H1 (cell line): ENCODE measurements at regions of chr17 and their contacts with region 1.

Region 1: GRCh38 chr17:74748529-74749365 is at the start of gene NHERF1:
- DNase-seq: peak in 1 of 2 experiments; percentile 94
- H3K4me3 ChIP-seq: peak within 1 kb of the TSS; percentile 56 to 91 (median 86)
- H3K27ac ChIP-seq: peak within 1 kb of the TSS; percentile 32; the same call in 1 of the 2 replicates
- H3K4me1 ChIP-seq: peaks cover 5 to 45% (median 25%) of the 10 kb centered on the region in 4 experiments
- H3K27me3 ChIP-seq: no peaks in the 10 kb centered on the region
- CTCF ChIP-seq: peak; percentile 34 to 37 (median 35)
- EP300 ChIP-seq: no peak
- POLR2A ChIP-seq: peak in 1 of 2 experiments; percentile 94; a peak in 2 of 3 replicates
- RAD21 ChIP-seq: peak in 1 of 2 experiments; percentile 22; a peak in 1 of 4 replicates
- total RNA-seq, gene NHERF1: 91.3 and 92.9 TPM in 2 replicates

Region 2: DNA sequence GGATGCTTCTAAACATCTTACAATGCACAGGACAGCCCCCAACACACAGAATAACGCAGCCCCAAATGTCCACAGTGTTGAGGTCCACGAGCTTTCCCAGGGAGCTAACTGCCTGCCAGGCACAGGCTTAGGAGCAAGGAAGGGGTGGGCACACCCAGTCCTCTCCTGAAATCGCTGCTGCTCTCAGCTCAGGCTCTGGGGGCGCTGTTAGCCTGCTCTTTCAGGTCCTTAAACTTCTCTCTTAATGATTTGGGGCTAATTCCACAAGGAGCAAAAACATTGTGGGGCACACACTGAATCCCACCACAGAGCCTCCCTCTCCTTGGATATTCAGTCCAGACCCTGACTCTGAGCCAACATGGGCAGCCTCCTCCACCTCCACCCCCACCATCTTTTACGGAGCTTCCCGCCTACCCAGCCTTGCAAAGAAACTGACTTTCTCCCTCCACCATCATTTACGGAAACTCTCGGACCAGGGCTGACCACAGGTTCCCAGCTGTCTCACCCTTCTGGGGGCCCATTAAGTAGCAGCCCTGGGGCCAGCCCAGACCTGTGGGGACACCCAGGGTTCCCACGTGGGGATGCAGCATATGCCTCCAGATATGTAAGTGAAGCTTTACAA is 182.5 kb before region 1 on chr17:
- CTCF ChIA-PET with region 1: interaction called, 15 read pairs
- POLR2A ChIA-PET with region 1: no interaction called
- DNase-seq: peak; percentile 31 to 85
- H3K4me3 ChIP-seq: no peak overlapping the region
- H3K27ac ChIP-seq: no peak overlapping the region
- H3K4me1 ChIP-seq: peaks cover 0 to 3% (median 2%) of the 10 kb centered on the region in 4 experiments; a peak in 3 of 7 replicates
- H3K27me3 ChIP-seq: peaks cover 0 to 2% (median 0%) of the 10 kb centered on the region in 4 experiments; a peak in 2 of 7 replicates
- CTCF ChIP-seq: peak; percentile 72 to 95 (median 76)
- EP300 ChIP-seq: no peak
- POLR2A ChIP-seq: no peak
- RAD21 ChIP-seq: peak; percentile 71 to 77

Region 3: GRCh38 chr17:74659898-74660297 is 88.8 kb before region 1 on chr17:
- CTCF ChIA-PET with region 1: interaction called, 38 read pairs
- POLR2A ChIA-PET with region 1: no interaction called
- DNase-seq: no peak
- H3K4me3 ChIP-seq: no peak overlapping the region
- H3K27ac ChIP-seq: no peak overlapping the region
- H3K4me1 ChIP-seq: 0 out of 7 replicates have a peak, but pooled peaks cover 0 to 2% (median 0%) of the 10 kb centered on the region in 4 experiments
- H3K27me3 ChIP-seq: no peaks in the 10 kb centered on the region
- CTCF ChIP-seq: no peak
- EP300 ChIP-seq: no peak
- POLR2A ChIP-seq: no peak
- RAD21 ChIP-seq: no peak

Region 4: DNA sequence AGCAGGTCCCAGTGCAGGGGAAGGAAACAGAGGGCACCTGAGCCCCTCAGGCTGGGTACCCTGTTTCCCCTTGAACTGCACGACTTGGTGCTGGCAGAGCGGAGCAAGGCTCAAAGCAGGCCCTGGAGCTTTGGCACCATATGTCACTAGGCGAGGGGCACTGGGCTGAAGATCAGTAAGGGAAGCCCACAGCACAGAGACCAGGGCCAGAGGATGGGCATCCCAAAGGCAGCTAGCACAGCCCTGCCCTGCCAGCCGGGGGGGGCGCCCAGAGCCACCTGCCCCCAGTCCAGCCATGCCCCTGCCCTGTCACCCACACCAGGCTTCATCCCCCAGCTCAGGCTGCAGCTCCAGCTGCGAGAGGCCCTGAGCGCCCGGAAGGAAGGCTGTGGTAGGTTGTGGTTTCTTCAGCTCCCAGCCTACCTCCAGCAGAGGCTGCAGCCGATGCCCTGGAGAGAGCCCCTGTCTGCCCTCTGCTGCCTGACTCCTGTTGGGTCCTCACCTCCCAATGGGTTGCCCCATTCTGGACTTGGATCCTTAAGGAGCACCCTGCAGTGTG is 10.6 kb after region 1 on chr17:
- CTCF ChIA-PET with region 1: interaction called, 170 read pairs
- POLR2A ChIA-PET with region 1: interaction called, 70 read pairs
- DNase-seq: no peak
- H3K4me3 ChIP-seq: peak overlapping the region in 1 of 4 experiments; percentile 36; a peak in 2 of 8 replicates
- H3K27ac ChIP-seq: peak overlapping the region; percentile 70; the same call in 1 of the 2 replicates
- H3K4me1 ChIP-seq: peaks cover 10 to 67% (median 51%) of the 10 kb centered on the region in 4 experiments
- H3K27me3 ChIP-seq: no peaks in the 10 kb centered on the region
- CTCF ChIP-seq: no peak
- EP300 ChIP-seq: no peak
- POLR2A ChIP-seq: no peak
- RAD21 ChIP-seq: no peak

Region 5: GRCh38 chr17:74776044-74776977 is 27.6 kb after region 1 on chr17 and contains the start of gene NAT9:
- CTCF ChIA-PET with region 1: interaction called, 388 read pairs
- POLR2A ChIA-PET with region 1: interaction called, 54 read pairs
- DNase-seq: peak; percentile 92 to 100
- H3K4me3 ChIP-seq: peak within 1 kb of the TSS; percentile 73 to 89 (median 80)
- H3K27ac ChIP-seq: peak within 1 kb of the TSS; percentile 39; the same call in 1 of the 2 replicates
- H3K4me1 ChIP-seq: peaks cover 0 to 6% (median 3%) of the 10 kb centered on the region in 4 experiments; a peak in 3 of 7 replicates
- H3K27me3 ChIP-seq: no peaks in the 10 kb centered on the region
- CTCF ChIP-seq: no peak
- EP300 ChIP-seq: no peak
- POLR2A ChIP-seq: no peak; a peak in 1 of 3 replicates
- RAD21 ChIP-seq: no peak
- total RNA-seq, gene NAT9: 40.6 and 42.7 TPM in 2 replicates

Region 6: GRCh38 chr17:74795327-74796020 is 46.7 kb after region 1 on chr17:
- CTCF ChIA-PET with region 1: interaction called, 46 read pairs
- POLR2A ChIA-PET with region 1: no interaction called
- DNase-seq: no peak
- H3K4me3 ChIP-seq: no peak overlapping the region
- H3K27ac ChIP-seq: no peak overlapping the region
- H3K4me1 ChIP-seq: no peaks in the 10 kb centered on the region
- H3K27me3 ChIP-seq: no peaks in the 10 kb centered on the region
- CTCF ChIP-seq: no peak
- EP300 ChIP-seq: no peak
- POLR2A ChIP-seq: no peak
- RAD21 ChIP-seq: no peak

Region 7: DNA sequence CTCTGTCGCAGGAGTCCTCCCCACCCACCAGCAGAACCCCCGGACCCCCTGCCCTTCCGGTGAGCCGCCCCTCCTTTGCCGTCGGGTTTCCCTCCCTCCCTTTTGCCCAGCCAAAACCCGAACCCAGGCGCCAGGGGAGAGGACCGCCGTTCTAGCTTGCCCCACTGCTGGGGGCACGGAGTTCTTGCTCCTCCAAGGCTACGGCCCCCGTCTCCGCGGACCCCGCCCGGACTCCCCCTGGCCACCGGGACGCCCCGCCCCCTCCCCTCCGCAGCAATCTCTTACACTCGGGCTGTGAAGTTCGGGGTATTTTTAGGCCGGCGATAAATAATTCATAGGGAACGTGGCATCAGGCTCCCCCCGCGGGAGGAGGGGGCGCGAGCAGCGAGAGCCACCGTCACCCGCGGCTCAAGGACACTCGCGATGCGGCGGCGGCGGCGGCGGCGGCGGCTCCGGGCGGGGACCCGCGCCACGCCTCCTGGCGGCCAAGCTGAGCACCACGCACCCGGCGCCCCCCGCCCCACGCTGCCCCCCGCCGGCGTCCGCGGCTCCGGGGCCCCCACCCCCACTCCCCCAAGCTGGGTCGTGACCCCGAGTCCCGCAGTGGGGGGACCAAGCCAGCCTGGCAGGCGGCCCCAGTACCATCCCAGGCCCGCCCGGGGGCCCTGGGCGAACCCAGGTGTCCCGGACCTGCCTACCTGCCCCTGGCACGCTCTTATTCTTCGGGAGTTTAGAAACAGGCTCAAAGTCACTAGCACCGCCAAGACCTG is 110.9 kb after region 1 on chr17 and contains the start of gene GRIN2C:
- CTCF ChIA-PET with region 1: interaction called, 68 read pairs
- POLR2A ChIA-PET with region 1: interaction called, 9 read pairs
- DNase-seq: peak in 1 of 2 experiments; percentile 69
- H3K4me3 ChIP-seq: peak within 1 kb of the TSS; percentile 21 to 60 (median 31); a peak in 6 of 8 replicates
- H3K27ac ChIP-seq: no peak within 1 kb of the TSS
- H3K4me1 ChIP-seq: peaks cover 0 to 7% (median 5%) of the 10 kb centered on the region in 4 experiments; a peak in 4 of 7 replicates
- H3K27me3 ChIP-seq: peaks cover 52 to 72% (median 64%) of the 10 kb centered on the region in 4 experiments
- CTCF ChIP-seq: peak; percentile 7 to 62 (median 25); a peak in 2 of 4 replicates
- EP300 ChIP-seq: no peak
- POLR2A ChIP-seq: no peak
- RAD21 ChIP-seq: no peak
- total RNA-seq, gene GRIN2C: 0.07 TPM in 1 of 2 replicates, not detected in the other

Region 8: DNA sequence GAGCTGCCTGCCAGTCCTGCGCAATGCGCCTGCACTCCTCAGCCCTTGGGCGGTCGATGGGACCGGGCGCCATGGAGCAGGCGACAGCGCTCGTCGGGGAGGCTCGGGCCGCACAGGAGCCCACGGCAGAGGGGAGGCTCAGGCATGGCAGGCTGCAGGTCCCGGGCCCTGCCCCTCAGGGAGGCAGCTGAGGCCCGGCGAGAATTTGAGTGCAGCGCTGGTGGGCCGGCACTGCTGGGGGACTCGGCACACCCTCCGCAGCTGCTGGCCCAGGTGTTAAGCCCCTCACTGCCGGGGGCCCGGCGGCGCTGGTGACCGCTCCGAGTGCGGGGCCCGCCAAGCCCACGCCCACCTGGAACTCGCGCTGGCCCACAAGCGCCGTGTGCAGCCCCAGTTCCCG is 158.3 kb after region 1 on chr17:
- CTCF ChIA-PET with region 1: no interaction called
- POLR2A ChIA-PET with region 1: no interaction called
- DNase-seq: no peak
- H3K4me3 ChIP-seq: no peak overlapping the region
- H3K27ac ChIP-seq: no peak overlapping the region
- H3K4me1 ChIP-seq: peaks cover 5 to 18% (median 14%) of the 10 kb centered on the region in 4 experiments
- H3K27me3 ChIP-seq: peaks cover 0 to 2% (median under 1%) of the 10 kb centered on the region in 4 experiments; a peak in 3 of 7 replicates
- CTCF ChIP-seq: no peak
- EP300 ChIP-seq: no peak
- POLR2A ChIP-seq: no peak
- RAD21 ChIP-seq: no peak